RWPE1 (cell line): ENCODE measurements at regions of chr9 and their contacts with region 1.

Region 1: GRCh38 chr9:131762356-131762932 is 22.6 kb upstream of the RAPGEF1 start:
- DNase-seq: peak; percentile 92
- H3K27ac ChIP-seq: no peak overlapping the region
- CTCF ChIP-seq: peak; percentile 99

Region 2: GRCh38 chr9:131297903-131298302 is 464.5 kb before region 1 on chr9:
- CTCF ChIA-PET with region 1: no interaction called
- POLR2A ChIA-PET with region 1: no interaction called
- DNase-seq: no peak
- H3K27ac ChIP-seq: no peak overlapping the region
- CTCF ChIP-seq: no peak

Region 3: DNA sequence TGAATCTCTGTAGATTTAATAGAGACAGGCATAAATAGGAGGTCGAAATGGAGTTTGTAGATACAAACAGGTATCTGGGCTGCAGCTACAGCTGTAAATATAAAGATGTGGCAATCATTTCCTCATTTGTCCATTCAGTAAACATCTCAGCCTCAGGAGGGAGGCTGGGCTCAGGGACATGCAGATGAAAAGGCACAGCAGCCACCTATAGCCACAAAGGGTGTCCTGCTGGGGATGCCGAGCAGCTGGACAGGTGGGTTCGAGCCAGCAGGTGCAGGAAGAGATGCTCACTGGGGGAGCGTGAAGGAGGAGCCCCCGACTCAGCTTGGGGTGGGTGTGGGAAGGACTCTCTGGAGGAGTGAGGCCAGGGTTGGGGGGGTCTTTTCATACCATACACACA is 25.9 kb after region 1 on chr9:
- CTCF ChIA-PET with region 1: no interaction called
- POLR2A ChIA-PET with region 1: no interaction called
- DNase-seq: no peak
- H3K27ac ChIP-seq: no peak overlapping the region
- CTCF ChIP-seq: no peak

Region 4: DNA sequence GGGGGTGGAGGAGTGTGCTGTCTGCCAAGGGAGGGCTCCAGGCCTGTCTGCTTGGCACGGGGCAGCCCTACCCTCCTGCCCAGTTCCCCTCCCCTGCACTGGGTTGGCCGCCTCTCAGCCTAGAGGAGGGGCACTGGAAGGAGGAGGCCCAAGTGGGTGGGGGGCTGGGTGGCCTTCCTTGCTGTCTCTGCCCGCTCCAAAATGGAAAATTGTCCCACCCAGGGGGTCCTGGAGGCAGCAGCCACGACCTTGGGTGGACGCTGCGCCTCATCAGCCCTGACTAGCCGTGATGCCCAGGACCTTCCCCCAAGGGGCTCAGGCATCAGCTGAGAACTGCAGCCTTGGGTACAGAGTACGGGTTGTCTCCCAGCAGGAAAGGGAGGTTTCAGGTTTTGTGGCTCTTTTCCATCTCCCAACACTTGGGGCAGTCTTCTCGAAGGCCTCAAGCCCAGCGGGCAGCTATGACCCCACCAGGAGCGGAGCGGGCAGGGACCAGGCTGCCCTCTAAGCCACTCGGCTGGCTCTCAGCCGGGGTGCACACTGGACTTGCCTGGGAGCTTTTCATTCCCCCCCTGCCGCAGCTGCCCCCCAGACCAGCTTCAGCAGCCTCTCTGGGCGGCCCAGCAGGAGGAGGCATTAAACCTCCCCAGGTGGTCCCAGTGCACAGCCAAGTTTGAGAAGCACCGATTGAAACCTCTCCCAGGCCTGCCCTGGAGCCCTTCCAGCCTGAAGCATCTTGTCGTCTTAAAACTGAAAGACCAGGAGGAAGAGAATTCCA is 420.1 kb after region 1 on chr9:
- CTCF ChIA-PET with region 1: interaction called, 10 read pairs
- POLR2A ChIA-PET with region 1: no interaction called
- DNase-seq: no peak
- H3K27ac ChIP-seq: no peak overlapping the region
- CTCF ChIP-seq: no peak

Region 5: DNA sequence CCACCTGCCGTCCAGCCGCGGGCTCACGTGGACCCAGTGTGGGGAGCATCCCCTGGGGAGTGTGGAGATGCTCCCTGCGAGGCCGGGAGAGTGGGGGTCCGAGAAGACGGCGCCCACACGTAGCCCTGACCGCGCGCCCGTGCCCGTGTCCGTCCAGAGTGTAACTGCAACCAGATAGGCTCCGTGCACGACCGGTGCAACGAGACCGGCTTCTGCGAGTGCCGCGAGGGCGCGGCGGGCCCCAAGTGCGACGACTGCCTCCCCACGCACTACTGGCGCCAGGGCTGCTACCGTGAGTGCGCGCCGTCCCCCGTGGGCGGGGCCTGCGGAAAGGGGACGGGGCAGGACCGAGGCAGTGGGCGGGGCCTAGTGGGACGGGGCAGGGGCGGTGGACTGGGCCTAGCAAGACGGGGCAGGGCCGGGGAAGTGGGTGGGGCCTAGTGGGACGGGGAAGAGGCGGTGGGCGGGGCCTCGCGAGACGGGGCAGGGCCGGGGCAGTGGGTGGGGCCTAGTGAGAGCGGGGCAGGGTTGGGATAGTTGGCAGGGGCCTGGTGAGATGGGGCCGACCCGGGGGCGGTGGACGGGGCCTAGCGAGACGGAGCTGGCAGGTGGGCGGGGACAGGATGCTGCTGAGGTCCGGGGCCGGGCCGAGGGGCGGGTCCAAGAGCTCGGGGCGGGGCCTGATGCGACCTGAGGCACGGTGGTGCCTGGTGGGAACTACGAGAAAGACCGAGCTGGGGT is 478.5 kb after region 1 on chr9:
- CTCF ChIA-PET with region 1: interaction called, 19 read pairs
- POLR2A ChIA-PET with region 1: no interaction called
- DNase-seq: peak; percentile 99
- H3K27ac ChIP-seq: no peak overlapping the region
- CTCF ChIP-seq: no peak

Region 6: DNA sequence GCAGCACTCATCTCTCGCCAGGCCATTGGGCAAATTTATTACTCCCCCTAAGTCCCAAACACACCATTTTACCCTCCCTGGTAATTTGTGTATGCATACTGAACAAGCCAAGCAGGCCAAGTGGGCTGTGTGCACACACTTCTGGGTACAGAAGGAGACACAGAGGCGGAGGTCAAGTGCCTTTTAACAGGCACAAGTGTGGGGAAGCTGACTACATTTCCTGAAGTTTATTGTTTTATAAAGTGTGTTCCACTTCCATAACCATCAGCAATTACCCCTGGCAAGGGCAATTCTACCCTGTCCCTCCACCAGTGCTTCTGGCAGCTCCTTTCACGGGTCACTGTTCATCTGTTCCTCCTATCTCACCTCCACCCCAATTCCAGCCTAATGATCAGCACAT is 498.4 kb after region 1 on chr9:
- CTCF ChIA-PET with region 1: interaction called, 11 read pairs
- POLR2A ChIA-PET with region 1: interaction called, 3 read pairs
- DNase-seq: no peak
- H3K27ac ChIP-seq: no peak overlapping the region
- CTCF ChIP-seq: no peak